ENCODE measurements at regions of chr10 and their contacts with region 1.

Region 1: DNA sequence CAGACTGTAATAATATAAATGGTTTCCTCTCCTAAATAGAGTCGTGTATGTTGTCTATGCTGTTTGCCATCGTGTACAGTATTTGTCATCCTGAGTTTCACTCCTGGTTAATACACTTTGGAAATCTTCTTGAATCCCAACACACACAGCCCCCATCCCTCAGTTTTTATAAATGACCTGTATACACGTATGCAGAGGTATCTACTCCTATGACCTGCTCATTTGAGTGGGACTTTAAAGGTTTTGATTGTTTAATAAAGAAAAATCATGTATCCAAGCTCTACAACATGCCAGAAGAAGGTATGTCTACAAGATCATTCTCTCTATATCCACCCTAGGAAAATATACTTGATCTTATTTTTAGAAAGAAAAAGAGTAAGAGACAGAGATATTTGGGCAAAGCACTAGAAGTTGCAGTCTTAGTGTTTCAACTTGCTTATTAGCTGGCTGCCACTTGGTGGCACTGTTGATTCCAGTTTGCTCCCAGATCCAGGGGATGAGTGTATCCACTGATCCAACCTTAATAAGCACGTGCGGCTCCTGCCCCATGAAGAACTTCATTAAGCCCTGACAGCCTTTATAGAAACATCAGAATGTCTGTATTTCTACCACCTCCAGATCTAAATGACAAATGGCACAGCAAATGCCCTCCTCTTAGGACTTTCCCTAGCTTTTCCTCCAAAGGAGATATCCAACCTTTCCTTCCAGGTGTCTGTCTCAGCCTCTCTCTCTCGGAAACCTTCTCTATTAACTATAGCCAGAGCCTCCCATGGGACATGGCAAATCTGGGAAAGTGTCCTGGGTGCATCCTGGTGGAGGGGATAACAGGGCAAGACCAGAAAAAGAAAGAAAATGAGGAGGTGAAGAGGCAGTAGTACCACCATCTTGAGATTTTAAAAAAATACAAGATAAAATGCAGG is 181.6 kb upstream of the NEBL start:
- DNase-seq: peak; percentile 52
- H3K4me3 ChIP-seq: no peak overlapping the region
- H3K27ac ChIP-seq: no peak overlapping the region
- H3K4me1 ChIP-seq: no peaks in the 10 kb centered on the region
- H3K27me3 ChIP-seq: no peaks in the 10 kb centered on the region
- CTCF ChIP-seq: peak; percentile 81 to 82

Region 2: GRCh38 chr10:20898866-20899535 is 179.7 kb before region 1 on chr10:
- CTCF ChIA-PET with region 1: no interaction called
- dilution Hi-C with region 1: no loop called
- in situ Hi-C with region 1: no loop called
- intact Hi-C with region 1: no loop called
- DNase-seq: peak; percentile 2
- H3K4me3 ChIP-seq: no peak overlapping the region
- H3K27ac ChIP-seq: no peak overlapping the region
- H3K4me1 ChIP-seq: no peaks in the 10 kb centered on the region
- H3K27me3 ChIP-seq: no peaks in the 10 kb centered on the region
- CTCF ChIP-seq: no peak

Region 3: DNA sequence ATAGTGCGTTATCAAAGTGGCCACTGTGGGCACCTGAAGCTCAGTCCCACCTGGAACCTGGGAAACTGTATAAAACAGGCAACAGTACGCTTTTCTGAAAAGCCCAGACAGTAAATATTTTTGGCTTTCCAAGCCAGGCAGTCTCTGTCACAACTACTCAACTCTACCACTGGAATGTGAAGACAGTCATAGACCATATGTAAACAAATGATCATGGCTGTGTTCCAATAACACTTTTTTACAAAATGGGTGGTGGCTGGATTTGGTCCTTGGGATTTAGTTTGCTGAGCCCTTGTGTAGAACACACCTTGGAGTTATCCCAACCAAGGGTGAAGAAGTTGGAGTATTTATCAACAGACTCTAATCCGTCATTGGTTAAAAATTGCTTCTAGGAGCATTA is 187.0 kb after region 1 on chr10:
- CTCF ChIA-PET with region 1: interaction called, 3 read pairs
- dilution Hi-C with region 1: loop called (anchors 10 kb)
- in situ Hi-C with region 1: loop called (anchors 5 kb)
- intact Hi-C with region 1: loop called (anchors 1 kb)
- DNase-seq: peak; percentile 83
- H3K4me3 ChIP-seq: no peak overlapping the region
- H3K27ac ChIP-seq: peak overlapping the region; percentile 6
- H3K4me1 ChIP-seq: peaks cover 19% of the 10 kb centered on the region
- H3K27me3 ChIP-seq: no peaks in the 10 kb centered on the region
- CTCF ChIP-seq: no peak

Region 4: DNA sequence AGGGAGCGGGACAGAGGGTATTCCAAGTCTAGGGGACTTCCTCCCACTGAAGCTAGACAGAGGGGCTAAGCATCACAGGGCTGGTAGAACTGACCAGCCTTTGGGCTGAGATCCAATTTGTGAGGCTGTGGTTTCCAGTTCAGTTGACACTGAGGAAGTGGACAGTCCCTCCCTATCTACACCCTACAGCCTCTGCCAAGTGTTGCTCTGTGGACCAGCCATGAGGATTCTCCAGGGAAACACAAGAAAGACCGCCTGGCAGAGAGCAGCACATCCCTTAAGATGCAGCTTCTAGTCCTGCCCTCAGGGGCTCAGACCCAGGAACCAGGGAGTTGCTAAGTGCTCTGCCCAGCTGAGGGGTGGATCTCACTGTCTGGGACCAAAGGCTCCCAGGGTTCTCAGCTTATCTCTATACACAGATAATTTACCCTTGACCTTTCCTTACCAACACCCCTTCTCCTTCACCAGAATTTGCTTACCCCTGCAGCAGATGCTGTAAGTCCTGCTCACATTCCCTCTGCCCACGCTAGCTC is 194.8 kb after region 1 on chr10:
- CTCF ChIA-PET with region 1: interaction called, 5 read pairs
- dilution Hi-C with region 1: loop called (anchors 10 kb)
- in situ Hi-C with region 1: loop called (anchors 5 kb)
- intact Hi-C with region 1: loop called (anchors 1 kb)
- DNase-seq: no peak
- H3K4me3 ChIP-seq: no peak overlapping the region
- H3K27ac ChIP-seq: no peak overlapping the region
- H3K4me1 ChIP-seq: no peaks in the 10 kb centered on the region
- H3K27me3 ChIP-seq: no peaks in the 10 kb centered on the region
- CTCF ChIP-seq: no peak